A549 (cell line): ENCODE measurements at regions of chr6 and their contacts with region 1.

Region 1: DNA sequence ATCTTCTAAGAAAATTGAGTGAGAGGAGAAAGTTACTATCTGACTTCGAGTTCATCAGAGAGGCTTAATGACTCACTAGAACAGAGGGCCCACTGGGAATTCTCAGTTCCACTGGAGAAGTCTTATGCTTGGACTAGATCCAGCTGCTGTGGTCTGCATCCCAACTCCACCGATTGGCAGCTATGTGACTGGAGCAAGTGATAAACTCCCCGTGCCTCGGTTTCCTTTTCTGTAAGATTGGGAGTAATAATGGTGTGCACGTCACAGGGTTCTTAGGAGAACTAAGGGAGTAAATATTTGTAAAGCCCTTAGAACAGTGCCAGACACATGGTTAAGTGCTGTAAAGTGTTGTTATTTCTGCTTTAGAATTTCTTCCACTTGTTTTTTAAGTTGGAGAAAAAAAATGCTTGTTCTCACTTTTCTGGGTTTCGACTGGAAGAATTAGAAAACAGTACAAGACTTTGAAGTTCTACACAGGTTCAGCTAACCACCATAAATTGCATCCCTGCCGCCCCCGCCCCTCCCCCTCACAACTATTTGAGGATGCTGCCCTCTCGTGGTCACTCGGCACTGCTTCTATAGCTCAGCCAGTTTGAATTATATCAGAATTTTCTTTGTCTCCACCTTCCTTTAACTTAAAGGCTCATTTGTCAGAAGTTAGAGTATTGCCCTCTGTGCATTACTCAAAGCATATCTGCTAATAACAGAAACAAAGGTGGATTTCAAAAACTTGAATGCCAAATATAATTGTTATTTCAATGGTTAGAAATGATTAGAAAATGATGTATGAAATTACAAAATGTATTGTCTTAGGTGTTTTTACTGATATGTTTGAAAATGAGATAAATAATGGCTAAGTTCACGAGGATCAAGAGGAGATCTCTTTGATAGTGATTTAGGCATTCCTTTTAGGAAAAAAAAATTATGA is 95.0 kb upstream of the IFNGR1 start:
- DNase-seq: peak; percentile 25 to 66
- ATAC-seq: peak; percentile 70 to 82; a peak in 5 of 6 replicates
- H3K4me3 ChIP-seq: no peak overlapping the region
- H3K27ac ChIP-seq: peak overlapping the region; percentile 6 to 9; a peak in 1 of 6 replicates
- H3K4me1 ChIP-seq: peaks cover 21% of the 10 kb centered on the region
- CTCF ChIP-seq: peak; percentile 74
- EP300 ChIP-seq: no peak
- POLR2A ChIP-seq: no peak
- RAD21 ChIP-seq: peak; percentile 82 to 83

Region 2: DNA sequence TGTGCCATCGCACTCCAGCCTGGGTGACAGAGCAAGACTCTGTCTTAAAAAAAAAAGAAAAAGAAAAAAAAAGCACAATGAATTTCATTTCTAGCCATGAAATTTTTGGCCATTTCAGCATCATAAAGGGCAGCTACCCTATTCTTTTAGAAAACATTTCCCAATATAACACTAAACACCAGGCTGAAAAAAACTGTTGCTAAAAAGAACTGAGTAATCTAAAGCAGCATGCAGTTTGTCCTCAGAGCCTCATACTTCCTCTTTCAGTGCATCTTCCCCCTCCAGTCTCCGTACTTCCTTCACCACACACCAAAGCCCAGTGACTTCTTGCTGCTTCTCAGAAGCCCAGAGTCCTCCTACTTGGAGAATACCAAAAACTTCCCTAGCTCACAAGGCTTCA is 89.4 kb before region 1 on chr6:
- CTCF ChIA-PET with region 1: no interaction called
- POLR2A ChIA-PET with region 1: no interaction called
- DNase-seq: no peak
- ATAC-seq: no peak
- H3K4me3 ChIP-seq: no peak overlapping the region
- H3K27ac ChIP-seq: peak overlapping the region in 1 of 2 experiments; percentile 78; a peak in 5 of 6 replicates
- H3K4me1 ChIP-seq: peaks cover 28% of the 10 kb centered on the region
- CTCF ChIP-seq: no peak
- EP300 ChIP-seq: no peak
- POLR2A ChIP-seq: no peak
- RAD21 ChIP-seq: no peak

Region 3: DNA sequence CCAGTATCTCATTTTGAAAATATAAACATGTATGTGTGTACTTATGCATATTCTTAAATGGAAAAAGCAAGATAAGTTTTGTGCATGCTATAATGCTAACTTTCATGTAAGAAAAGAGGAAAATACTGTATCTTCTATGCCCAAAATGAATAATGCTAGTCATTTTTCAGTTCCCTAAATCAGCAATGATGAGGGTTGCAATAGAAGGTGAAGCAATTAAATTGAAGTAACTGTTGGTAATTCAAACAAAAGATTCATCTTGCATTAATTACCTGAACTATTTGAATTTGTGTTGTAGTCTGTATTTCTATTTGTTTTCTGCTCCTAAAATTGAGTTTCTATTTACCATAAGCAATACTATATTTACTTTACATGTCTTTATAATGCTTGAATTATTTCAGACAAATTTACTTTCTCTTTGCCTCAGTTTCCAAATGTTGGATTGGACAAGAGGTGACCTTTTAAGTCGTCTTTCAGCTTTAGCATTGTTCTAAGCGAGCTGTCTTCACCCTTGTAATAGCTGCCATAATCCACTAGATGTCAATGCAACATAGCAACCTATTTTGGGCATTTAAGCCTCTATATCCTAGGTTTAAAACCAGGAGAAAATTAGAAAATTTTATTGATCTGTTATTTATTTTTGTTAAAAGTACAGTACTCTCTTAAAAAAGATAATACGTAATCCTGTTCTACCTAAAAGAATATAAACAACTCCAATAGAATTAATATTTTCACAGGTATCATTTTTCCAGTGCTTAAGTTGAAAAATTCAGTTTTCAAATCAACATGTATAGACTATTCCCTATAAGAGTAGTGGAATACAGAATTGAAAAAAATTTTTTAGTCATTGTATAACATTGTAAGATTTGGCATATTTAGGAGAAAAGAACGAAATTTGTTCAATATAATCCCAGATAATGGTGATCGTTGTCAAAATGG is 42.7 kb before region 1 on chr6:
- CTCF ChIA-PET with region 1: interaction called, 26 read pairs
- POLR2A ChIA-PET with region 1: no interaction called
- DNase-seq: peak; percentile 13 to 60
- ATAC-seq: peak in 1 of 2 experiments; percentile 75; a peak in 3 of 6 replicates
- H3K4me3 ChIP-seq: no peak overlapping the region
- H3K27ac ChIP-seq: peak overlapping the region in 1 of 2 experiments; percentile 8; a peak in 1 of 6 replicates
- H3K4me1 ChIP-seq: no peaks in the 10 kb centered on the region; the same call in 2 of the 3 replicates
- CTCF ChIP-seq: peak; percentile 74
- EP300 ChIP-seq: no peak
- POLR2A ChIP-seq: no peak
- RAD21 ChIP-seq: peak; percentile 79 to 81

Region 4: DNA sequence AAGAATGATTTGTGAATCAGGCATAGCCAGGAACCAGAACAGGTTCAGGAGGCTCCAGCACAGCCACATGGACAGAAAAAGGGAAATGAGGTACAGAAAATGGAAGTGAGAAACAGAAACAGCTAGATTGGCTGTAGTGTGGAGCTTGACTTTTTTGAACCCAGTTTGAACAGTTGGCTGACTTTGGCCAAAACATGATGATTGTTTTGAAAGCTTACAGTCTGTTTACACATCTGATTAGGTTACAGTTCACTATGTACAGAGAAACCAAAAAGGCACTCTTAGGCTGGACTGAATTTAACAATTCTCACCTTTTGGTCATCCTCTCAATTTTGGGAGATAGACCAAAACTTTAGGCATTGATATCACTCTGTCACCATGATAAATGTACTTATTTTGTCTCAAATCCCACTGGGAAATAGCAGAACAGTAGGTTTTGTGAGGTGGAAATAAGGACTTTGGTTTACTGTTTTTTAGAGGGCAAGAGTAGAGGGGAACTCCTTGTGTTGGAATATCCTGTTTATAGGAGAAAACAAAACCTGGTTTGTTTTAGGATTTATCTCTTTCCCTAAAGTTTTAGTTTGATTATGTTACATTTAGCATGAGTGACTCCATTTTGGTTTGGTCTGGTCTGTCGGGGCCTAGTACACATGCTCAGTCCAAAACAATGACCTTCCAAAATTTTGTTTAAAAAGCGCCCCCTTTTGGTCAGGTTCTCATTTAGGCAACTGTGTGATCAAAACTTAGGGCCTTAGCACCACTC is 56.9 kb after region 1 on chr6:
- CTCF ChIA-PET with region 1: no interaction called
- POLR2A ChIA-PET with region 1: no interaction called
- DNase-seq: peak in 1 of 2 experiments; percentile 13
- ATAC-seq: no peak
- H3K4me3 ChIP-seq: no peak overlapping the region
- H3K27ac ChIP-seq: no peak overlapping the region
- H3K4me1 ChIP-seq: no peaks in the 10 kb centered on the region
- CTCF ChIP-seq: no peak
- EP300 ChIP-seq: no peak
- POLR2A ChIP-seq: no peak
- RAD21 ChIP-seq: no peak